Dorsolateral prefrontal cortex (tissue), 120 donors: ENCODE measurements at regions of chr7 and their contacts with region 1.

Region 1: GRCh38 chr7:51009704-51010496 is 227.2 kb upstream of the GRB10 start:
- DNase-seq: no peak
- H3K4me3 ChIP-seq: no peak overlapping the region
- H3K27ac ChIP-seq: no peak overlapping the region
- H3K27me3 ChIP-seq: no peaks in the 10 kb centered on the region
- CTCF ChIP-seq: no peak

Region 2: GRCh38 chr7:49611951-49612350 is 1397.9 kb before region 1 on chr7:
- intact Hi-C with region 1: no loop called
- DNase-seq: no peak
- H3K4me3 ChIP-seq: no peak overlapping the region
- H3K27ac ChIP-seq: no peak overlapping the region
- H3K27me3 ChIP-seq: peaks cover 0 to 8% (median 0%) of the 10 kb centered on the region in 45 donors
- CTCF ChIP-seq: no peak

Region 3: GRCh38 chr7:50608196-50608906 is 401.5 kb before region 1 on chr7:
- intact Hi-C with region 1: loop called in 1 of 2 experiments (anchors 10 kb)
- DNase-seq: no peak
- H3K4me3 ChIP-seq: no peak overlapping the region
- H3K27ac ChIP-seq: no peak overlapping the region
- H3K27me3 ChIP-seq: no peaks in the 10 kb centered on the region
- CTCF ChIP-seq: no peak

Region 4: DNA sequence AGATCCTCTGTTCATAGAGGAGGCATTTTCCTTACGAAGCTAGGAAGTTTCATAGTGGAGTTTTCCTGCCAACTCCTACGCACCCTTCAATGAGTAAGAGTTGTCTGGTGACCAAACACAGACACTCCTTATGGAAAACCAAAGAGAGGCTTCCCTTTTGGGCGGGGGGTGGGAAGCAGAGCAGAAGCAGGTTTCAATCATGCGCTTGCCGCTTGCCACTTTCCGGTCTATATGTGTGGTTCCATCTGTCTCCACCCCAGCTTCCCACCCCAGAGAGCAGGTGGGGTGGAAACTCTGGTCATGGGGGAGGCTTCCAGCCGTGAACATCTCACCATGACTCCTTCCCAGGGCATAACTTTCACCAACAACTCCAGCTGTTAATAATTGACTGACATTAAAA is 158.4 kb before region 1 on chr7:
- intact Hi-C with region 1: no loop called
- DNase-seq: no peak
- H3K4me3 ChIP-seq: no peak overlapping the region
- H3K27ac ChIP-seq: no peak overlapping the region
- H3K27me3 ChIP-seq: no peaks in the 10 kb centered on the region
- CTCF ChIP-seq: no peak

Region 5: DNA sequence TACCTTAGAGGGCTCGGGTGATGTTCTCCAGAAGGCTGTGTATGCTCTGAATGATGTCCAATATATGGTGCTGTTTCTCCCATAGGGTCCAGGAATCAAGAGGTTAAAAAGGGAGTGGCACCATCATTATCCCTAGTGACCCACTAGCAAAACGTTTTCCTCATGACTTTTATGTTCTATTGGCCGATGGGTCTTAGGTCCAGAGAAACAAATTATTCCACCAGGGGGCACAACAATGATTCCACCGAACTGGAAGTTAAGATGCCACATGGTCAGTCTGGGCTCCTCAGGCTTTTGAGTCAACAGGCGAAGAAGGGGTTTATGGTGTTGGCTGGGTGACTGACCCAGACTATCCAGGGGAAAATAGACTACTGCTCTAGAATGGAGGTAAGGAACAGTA is 50.6 kb after region 1 on chr7:
- intact Hi-C with region 1: loop called in 1 of 2 experiments (anchors 5 kb)
- DNase-seq: no peak
- H3K4me3 ChIP-seq: no peak overlapping the region
- H3K27ac ChIP-seq: peak overlapping the region in 1 of 59 donors; percentile 7
- H3K27me3 ChIP-seq: no peaks in the 10 kb centered on the region
- CTCF ChIP-seq: peak in 20 of 56 donors; percentile 9 to 36 (median 19)